ENCODE measurements at regions of chr2 and their contacts with region 1.

Region 1: DNA sequence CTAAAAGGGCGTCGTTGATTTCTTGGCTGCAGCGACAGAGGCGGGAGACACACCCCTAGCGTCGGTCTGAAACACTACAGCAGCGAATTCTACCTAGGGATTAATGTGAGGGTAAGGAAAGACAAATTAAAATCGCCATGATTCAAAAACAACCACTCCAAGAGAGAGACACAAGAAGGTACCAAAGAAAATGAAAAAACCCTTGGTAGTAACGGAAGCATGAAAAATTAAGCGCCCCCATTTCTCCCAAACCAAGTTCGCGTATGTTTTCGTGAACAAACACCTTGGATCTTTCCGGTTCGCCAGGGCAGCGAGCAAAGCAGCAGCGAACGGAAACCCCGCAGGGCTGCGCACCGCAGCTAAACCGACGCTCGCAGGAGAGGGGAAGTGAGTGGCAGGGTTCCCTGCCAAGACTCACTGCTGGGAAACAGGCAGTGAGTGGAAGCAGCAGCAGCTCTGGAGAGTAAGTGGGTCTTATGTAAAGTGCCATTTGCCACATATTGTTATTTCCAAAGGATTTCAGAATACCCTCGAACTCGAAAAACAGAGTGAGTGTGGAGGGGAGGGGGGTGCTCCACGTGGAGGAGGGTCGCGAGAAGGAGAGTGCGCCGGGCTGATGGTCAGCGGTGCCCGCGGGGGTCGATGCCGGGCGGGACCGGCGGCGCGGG is 1.0 kb downstream of the PPP3R1 start:
- DNase-seq: peak; percentile 60 to 94 (median 70)
- ATAC-seq: peak; percentile 72
- H3K4me3 ChIP-seq: peak overlapping the region; percentile 84
- H3K4me3 Mint-ChIP-seq: peak overlapping the region; percentile 94
- H3K27ac ChIP-seq: peak overlapping the region; percentile 90 to 92
- H3K27ac Mint-ChIP-seq: no peak overlapping the region
- H3K4me1 ChIP-seq: peaks cover 39% of the 10 kb centered on the region
- H3K4me1 Mint-ChIP-seq: peaks cover 50% of the 10 kb centered on the region
- H3K27me3 ChIP-seq: no peaks in the 10 kb centered on the region
- H3K27me3 Mint-ChIP-seq: peaks cover 5% of the 10 kb centered on the region
- CTCF ChIP-seq: peak; percentile 80

Region 2: GRCh38 chr2:68062680-68063387 is 188.5 kb before region 1 on chr2 and contains the start of gene C1D:
- CTCF ChIA-PET with region 1: no interaction called
- POLR2A ChIA-PET with region 1: interaction called, 7 read pairs
- intact Hi-C with region 1: loop called in 1 of 2 experiments (anchors 5 kb)
- DNase-seq: peak; percentile 82 to 96 (median 91)
- ATAC-seq: peak; percentile 91
- H3K4me3 ChIP-seq: peak within 1 kb of the TSS; percentile 78
- H3K4me3 Mint-ChIP-seq: peak within 1 kb of the TSS; percentile 93
- H3K27ac ChIP-seq: peak within 1 kb of the TSS; percentile 81 to 93
- H3K27ac Mint-ChIP-seq: peak within 1 kb of the TSS; percentile 92
- H3K4me1 ChIP-seq: peaks cover 14% of the 10 kb centered on the region
- H3K4me1 Mint-ChIP-seq: peaks cover 46% of the 10 kb centered on the region
- H3K27me3 ChIP-seq: no peaks in the 10 kb centered on the region
- H3K27me3 Mint-ChIP-seq: peaks cover 8% of the 10 kb centered on the region
- CTCF ChIP-seq: no peak
- total RNA-seq, gene C1D: 16.2 to 16.4 TPM

Region 3: GRCh38 chr2:68157402-68158133 is 93.8 kb before region 1 on chr2 and contains the start of gene PNO1:
- CTCF ChIA-PET with region 1: interaction called, 4 read pairs
- POLR2A ChIA-PET with region 1: interaction called, 95 read pairs
- intact Hi-C with region 1: loop called (anchors 1 kb)
- DNase-seq: peak; percentile 93 to 98 (median 97)
- ATAC-seq: peak; percentile 91
- H3K4me3 ChIP-seq: peak within 1 kb of the TSS; percentile 94
- H3K4me3 Mint-ChIP-seq: peak within 1 kb of the TSS; percentile 96
- H3K27ac ChIP-seq: peak within 1 kb of the TSS; percentile 92 to 99
- H3K27ac Mint-ChIP-seq: peak within 1 kb of the TSS; percentile 98
- H3K4me1 ChIP-seq: peaks cover 26% of the 10 kb centered on the region
- H3K4me1 Mint-ChIP-seq: peaks cover 61% of the 10 kb centered on the region
- H3K27me3 ChIP-seq: no peaks in the 10 kb centered on the region
- H3K27me3 Mint-ChIP-seq: no peaks in the 10 kb centered on the region
- CTCF ChIP-seq: no peak
- total RNA-seq, gene PNO1: 27.1 to 29.5 TPM

Region 4: DNA sequence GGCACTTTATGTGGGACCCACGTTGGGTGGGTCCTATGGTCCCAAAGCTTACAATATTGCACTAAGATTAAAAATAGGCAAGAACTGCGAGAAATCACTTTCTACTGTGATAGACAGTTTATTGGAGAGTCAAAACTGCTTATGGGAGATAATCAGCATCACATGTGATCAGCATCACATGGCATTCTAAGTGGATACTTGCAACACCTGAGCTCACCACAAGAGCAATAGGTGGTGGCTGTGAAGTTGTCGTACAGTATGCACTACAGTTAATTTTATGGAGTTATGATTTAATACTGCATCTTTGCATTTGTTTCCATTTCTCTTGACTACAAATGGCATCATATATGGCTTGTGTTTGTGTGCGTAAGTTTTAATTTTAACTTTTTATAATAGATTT is 82.0 kb before region 1 on chr2:
- CTCF ChIA-PET with region 1: no interaction called
- POLR2A ChIA-PET with region 1: interaction called, 14 read pairs
- intact Hi-C with region 1: no loop called
- DNase-seq: no peak
- ATAC-seq: peak; percentile 66
- H3K4me3 ChIP-seq: no peak overlapping the region
- H3K4me3 Mint-ChIP-seq: no peak overlapping the region
- H3K27ac ChIP-seq: no peak overlapping the region
- H3K27ac Mint-ChIP-seq: no peak overlapping the region
- H3K4me1 ChIP-seq: no peaks in the 10 kb centered on the region
- H3K4me1 Mint-ChIP-seq: peaks cover 18% of the 10 kb centered on the region
- H3K27me3 ChIP-seq: no peaks in the 10 kb centered on the region
- H3K27me3 Mint-ChIP-seq: no peaks in the 10 kb centered on the region
- CTCF ChIP-seq: no peak

Region 5: GRCh38 chr2:68196120-68196716 is 55.1 kb before region 1 on chr2:
- CTCF ChIA-PET with region 1: interaction called, 12 read pairs
- POLR2A ChIA-PET with region 1: interaction called, 8 read pairs
- intact Hi-C with region 1: loop called (anchors 2 kb)
- DNase-seq: peak in 10 of 14 experiments; percentile 22 to 83 (median 48)
- ATAC-seq: peak; percentile 59
- H3K4me3 ChIP-seq: no peak overlapping the region
- H3K4me3 Mint-ChIP-seq: no peak overlapping the region
- H3K27ac ChIP-seq: no peak overlapping the region
- H3K27ac Mint-ChIP-seq: peak overlapping the region; percentile 64
- H3K4me1 ChIP-seq: no peaks in the 10 kb centered on the region
- H3K4me1 Mint-ChIP-seq: peaks cover 80% of the 10 kb centered on the region
- H3K27me3 ChIP-seq: no peaks in the 10 kb centered on the region
- H3K27me3 Mint-ChIP-seq: no peaks in the 10 kb centered on the region
- CTCF ChIP-seq: peak; percentile 64

Region 6: DNA sequence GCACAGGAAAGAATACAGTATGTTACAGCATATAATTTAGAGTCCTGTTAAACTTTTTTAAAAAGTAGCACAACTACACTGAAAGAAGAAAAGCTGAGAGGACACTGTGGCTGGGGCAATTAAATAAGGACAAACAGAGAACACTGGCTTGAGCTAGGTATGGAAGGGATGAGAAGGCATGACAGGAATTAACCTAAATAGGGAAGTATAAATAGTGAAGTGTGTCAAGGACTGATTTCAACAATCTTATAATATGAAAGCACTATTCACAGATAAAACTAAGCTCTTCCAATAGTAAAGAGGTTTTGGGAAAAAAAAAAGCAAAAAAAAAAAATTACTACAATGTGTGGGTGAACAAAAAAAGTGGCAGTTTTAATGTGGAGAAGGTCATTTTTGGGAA is 44.5 kb before region 1 on chr2:
- CTCF ChIA-PET with region 1: no interaction called
- POLR2A ChIA-PET with region 1: interaction called, 6 read pairs
- intact Hi-C with region 1: loop called in 1 of 2 experiments (anchors 2 kb)
- DNase-seq: no peak
- ATAC-seq: no peak
- H3K4me3 ChIP-seq: no peak overlapping the region
- H3K4me3 Mint-ChIP-seq: peak overlapping the region; percentile 12
- H3K27ac ChIP-seq: peak overlapping the region in 1 of 2 donors; percentile 9
- H3K27ac Mint-ChIP-seq: peak overlapping the region; percentile 58
- H3K4me1 ChIP-seq: peaks cover 36% of the 10 kb centered on the region
- H3K4me1 Mint-ChIP-seq: peaks cover 79% of the 10 kb centered on the region
- H3K27me3 ChIP-seq: no peaks in the 10 kb centered on the region
- H3K27me3 Mint-ChIP-seq: no peaks in the 10 kb centered on the region
- CTCF ChIP-seq: no peak

Region 7: DNA sequence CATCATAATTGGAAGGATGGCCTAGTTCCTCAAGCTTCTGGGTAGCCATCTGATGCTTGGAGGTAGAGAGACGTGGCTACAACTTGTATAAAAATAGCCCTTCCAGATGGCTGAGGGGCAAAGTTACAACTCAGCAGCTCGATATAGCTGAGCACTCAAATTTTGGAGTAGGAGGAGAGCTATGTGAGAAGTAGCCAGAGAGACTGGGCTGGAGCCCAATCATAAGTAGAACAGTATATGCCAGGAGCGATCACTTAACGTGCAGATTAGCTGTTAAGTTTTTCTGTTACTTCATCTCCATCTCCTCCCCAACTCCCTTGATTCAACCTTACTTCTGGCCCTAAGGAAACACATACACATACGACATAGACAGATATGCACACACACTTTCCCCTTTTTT is 39.6 kb after region 1 on chr2:
- CTCF ChIA-PET with region 1: no interaction called
- POLR2A ChIA-PET with region 1: no interaction called
- intact Hi-C with region 1: no loop called
- DNase-seq: no peak
- ATAC-seq: no peak
- H3K4me3 ChIP-seq: no peak overlapping the region
- H3K4me3 Mint-ChIP-seq: no peak overlapping the region
- H3K27ac ChIP-seq: no peak overlapping the region
- H3K27ac Mint-ChIP-seq: no peak overlapping the region
- H3K4me1 ChIP-seq: no peaks in the 10 kb centered on the region
- H3K4me1 Mint-ChIP-seq: no peaks in the 10 kb centered on the region
- H3K27me3 ChIP-seq: peaks cover 0 to 4% of the 10 kb centered on the region in 2 experiments
- H3K27me3 Mint-ChIP-seq: peaks cover 23% of the 10 kb centered on the region
- CTCF ChIP-seq: no peak

Measured in CD4-positive, alpha-beta T cell (primary cell).